MCF 10A (cell line): ENCODE measurements at regions of chr7 and their contacts with region 1.

Region 1: GRCh38 chr7:98168181-98168905 is 42.9 kb upstream of the BHLHA15 start:
- DNase-seq: peak; percentile 82
- H3K4me3 Mint-ChIP-seq: no peak overlapping the region
- H3K27ac Mint-ChIP-seq: no peak overlapping the region
- H3K4me1 Mint-ChIP-seq: peaks cover 9% of the 10 kb centered on the region
- H3K27me3 Mint-ChIP-seq: no peaks in the 10 kb centered on the region
- CTCF ChIP-seq: peak; percentile 86

Region 2: DNA sequence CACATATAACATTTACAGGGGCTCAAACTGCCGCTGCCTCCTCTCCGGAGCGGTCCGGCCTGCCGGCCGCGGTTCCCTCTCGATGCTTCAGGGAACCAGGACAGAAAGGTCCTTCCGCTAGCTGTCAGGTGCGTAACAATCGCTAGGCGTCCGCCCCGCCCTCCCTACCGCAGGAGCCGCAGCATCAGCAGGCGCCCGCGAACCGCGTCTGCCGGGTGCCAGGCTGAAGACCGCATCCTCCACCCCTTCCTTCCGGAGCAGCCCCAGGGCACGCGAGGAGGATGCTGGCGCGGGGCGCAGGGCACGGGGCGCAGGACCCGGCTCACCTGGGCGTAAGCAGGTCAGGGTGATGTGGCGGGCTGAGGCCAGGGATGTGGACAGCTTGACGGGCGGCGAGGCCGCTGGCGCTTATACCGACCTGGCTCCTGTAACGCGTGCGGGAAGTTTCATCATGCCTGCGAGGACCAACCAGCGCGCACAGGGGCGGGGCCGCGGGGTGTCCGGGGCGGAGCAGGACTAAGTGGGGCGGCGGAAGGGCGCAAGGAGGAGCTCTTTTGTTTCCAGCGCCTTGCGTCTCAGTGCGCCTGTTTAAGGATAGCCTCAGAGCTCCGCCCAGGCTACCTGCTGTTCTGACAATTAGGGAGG is 296.2 kb before region 1 on chr7 and contains the start of gene ASNS:
- CTCF ChIA-PET with region 1: interaction called, 6 read pairs
- POLR2A ChIA-PET with region 1: interaction called, 4 read pairs
- intact Hi-C with region 1: loop called (anchors 10 kb)
- DNase-seq: peak; percentile 96
- H3K4me3 Mint-ChIP-seq: peak within 1 kb of the TSS; percentile 86
- H3K27ac Mint-ChIP-seq: peak within 1 kb of the TSS; percentile 83
- H3K4me1 Mint-ChIP-seq: peaks cover 12% of the 10 kb centered on the region
- H3K27me3 Mint-ChIP-seq: no peaks in the 10 kb centered on the region
- CTCF ChIP-seq: no peak
- total RNA-seq, gene ASNS: 191 and 303 TPM in 2 replicates

Region 3: DNA sequence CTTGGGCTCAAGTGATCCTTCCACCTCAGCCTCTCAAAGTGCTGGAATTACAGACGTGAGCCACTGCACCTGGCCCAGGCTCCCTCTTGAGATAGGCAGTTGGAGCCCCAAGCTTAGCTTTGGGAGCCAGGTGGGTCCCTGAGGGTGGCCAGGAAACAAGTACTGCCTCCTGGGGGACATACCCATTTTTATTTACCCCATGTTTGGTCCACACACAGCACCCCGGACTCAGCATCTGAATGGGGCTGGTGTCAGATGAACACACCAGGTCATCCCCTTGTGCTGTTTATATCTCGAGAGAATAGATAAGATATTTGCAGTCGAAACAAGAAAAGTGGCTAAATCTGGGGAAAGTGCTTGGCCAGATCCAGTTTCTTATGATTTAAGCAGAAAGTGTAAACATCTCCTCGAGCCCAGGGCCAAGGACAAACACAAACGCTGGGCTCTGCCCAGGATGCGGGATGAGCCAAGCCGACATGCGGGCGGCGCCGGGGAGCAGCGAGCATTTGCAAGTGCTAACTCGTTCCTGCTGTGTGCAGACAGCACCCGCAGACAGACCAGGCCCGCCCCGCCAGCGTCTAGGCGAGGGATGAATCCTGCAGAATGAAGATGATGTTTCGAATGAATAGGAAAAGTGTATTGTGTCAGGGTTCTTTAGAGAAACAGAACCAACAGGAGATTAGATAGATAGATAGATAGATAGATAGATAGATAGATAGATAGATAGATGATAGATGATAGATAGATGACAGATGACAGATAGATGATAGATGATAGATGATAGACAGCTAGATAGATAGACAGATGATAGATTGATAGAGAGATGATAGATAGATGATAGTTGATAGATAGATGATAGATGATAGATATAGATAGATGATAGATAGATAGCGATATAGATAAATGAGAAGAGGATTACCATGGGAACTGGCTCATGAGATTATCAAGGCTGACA is 134.0 kb before region 1 on chr7:
- CTCF ChIA-PET with region 1: interaction called, 13 read pairs
- POLR2A ChIA-PET with region 1: no interaction called
- intact Hi-C with region 1: no loop called
- DNase-seq: peak; percentile 38
- H3K4me3 Mint-ChIP-seq: no peak overlapping the region
- H3K27ac Mint-ChIP-seq: no peak overlapping the region
- H3K4me1 Mint-ChIP-seq: peaks cover 6% of the 10 kb centered on the region
- H3K27me3 Mint-ChIP-seq: no peaks in the 10 kb centered on the region
- CTCF ChIP-seq: no peak

Region 4: DNA sequence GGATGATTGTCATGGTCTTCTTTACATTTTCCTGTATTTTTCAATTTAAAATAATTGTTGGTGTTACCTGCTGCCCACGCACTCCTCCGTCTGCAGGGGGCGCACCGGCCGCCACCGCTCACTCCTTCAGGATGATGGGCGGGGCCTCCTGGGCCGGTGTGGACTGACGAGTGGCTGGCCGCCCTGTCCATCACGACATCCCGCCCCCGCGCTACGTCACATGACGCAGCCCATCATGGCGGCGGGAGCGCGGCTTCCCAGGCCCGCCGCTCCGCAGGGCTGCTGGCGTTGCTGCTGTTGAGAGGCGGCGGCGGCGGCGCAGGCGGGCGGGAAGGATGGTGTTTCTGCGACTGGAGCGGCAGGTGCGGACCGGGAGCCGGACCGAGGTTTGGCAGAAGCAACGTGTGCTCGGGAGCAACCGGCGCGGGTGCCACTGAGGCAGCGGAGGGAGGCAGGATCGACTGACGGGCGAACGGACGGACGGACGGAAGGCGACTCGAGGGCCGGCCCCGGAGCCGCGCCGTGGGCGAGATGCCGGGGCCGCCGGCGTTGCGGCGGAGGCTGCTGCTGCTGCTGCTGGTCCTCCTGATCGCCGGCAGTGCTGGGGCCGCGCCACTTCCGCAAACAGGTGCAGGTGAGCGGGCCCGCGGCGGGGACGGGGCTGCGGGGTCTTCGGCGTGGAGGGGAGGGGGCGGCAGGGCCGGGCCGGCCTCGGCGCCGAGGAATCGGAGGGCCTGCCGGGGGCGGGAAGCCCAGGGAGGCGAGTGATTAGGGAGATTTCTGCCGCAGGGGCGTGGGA is 61.5 kb before region 1 on chr7 and contains the start of gene LMTK2:
- CTCF ChIA-PET with region 1: interaction called, 87 read pairs
- POLR2A ChIA-PET with region 1: interaction called, 3 read pairs
- intact Hi-C with region 1: loop called (anchors 1 kb)
- DNase-seq: peak; percentile 93
- H3K4me3 Mint-ChIP-seq: peak within 1 kb of the TSS; percentile 90
- H3K27ac Mint-ChIP-seq: peak within 1 kb of the TSS; percentile 79
- H3K4me1 Mint-ChIP-seq: peaks cover 12% of the 10 kb centered on the region
- H3K27me3 Mint-ChIP-seq: no peaks in the 10 kb centered on the region
- CTCF ChIP-seq: peak; percentile 84
- total RNA-seq, gene LMTK2: 16.8 and 21.6 TPM in 2 replicates

Region 5: GRCh38 chr7:98133181-98133580 is 35.2 kb before region 1 on chr7:
- CTCF ChIA-PET with region 1: interaction called, 21 read pairs
- POLR2A ChIA-PET with region 1: interaction called, 11 read pairs
- intact Hi-C with region 1: no loop called
- DNase-seq: no peak
- H3K4me3 Mint-ChIP-seq: peak overlapping the region; percentile 33
- H3K27ac Mint-ChIP-seq: peak overlapping the region; percentile 91
- H3K4me1 Mint-ChIP-seq: peaks cover 35% of the 10 kb centered on the region
- H3K27me3 Mint-ChIP-seq: no peaks in the 10 kb centered on the region
- CTCF ChIP-seq: no peak

Region 6: GRCh38 chr7:98142658-98143057 is 25.7 kb before region 1 on chr7:
- CTCF ChIA-PET with region 1: interaction called, 13 read pairs
- POLR2A ChIA-PET with region 1: interaction called, 3 read pairs
- intact Hi-C with region 1: no loop called
- DNase-seq: no peak
- H3K4me3 Mint-ChIP-seq: no peak overlapping the region
- H3K27ac Mint-ChIP-seq: no peak overlapping the region
- H3K4me1 Mint-ChIP-seq: no peaks in the 10 kb centered on the region
- H3K27me3 Mint-ChIP-seq: no peaks in the 10 kb centered on the region
- CTCF ChIP-seq: no peak

Region 7: DNA sequence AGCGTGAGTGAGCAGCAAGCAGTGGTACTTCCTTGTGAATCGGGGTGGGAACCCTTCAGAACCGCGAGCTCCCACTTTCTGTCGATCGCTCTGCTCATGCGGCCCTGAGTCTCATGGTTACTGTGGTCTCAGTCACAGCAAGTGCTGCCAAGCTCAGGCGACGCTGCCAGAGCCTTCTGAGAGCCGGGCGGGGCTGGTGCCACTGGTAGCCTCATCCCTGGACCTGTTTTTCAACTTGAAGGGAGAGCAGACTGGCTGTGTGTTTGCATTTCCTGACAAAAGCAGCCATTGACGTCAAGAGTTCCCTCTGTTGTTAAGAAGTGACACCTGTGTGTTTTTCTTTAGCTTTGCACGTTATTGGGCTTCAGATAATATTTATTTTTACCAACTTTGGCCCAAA is 10.0 kb after region 1 on chr7:
- CTCF ChIA-PET with region 1: interaction called, 51 read pairs
- POLR2A ChIA-PET with region 1: interaction called, 4 read pairs
- intact Hi-C with region 1: no loop called
- DNase-seq: no peak
- H3K4me3 Mint-ChIP-seq: no peak overlapping the region
- H3K27ac Mint-ChIP-seq: no peak overlapping the region
- H3K4me1 Mint-ChIP-seq: no peaks in the 10 kb centered on the region
- H3K27me3 Mint-ChIP-seq: no peaks in the 10 kb centered on the region
- CTCF ChIP-seq: no peak

Region 8: DNA sequence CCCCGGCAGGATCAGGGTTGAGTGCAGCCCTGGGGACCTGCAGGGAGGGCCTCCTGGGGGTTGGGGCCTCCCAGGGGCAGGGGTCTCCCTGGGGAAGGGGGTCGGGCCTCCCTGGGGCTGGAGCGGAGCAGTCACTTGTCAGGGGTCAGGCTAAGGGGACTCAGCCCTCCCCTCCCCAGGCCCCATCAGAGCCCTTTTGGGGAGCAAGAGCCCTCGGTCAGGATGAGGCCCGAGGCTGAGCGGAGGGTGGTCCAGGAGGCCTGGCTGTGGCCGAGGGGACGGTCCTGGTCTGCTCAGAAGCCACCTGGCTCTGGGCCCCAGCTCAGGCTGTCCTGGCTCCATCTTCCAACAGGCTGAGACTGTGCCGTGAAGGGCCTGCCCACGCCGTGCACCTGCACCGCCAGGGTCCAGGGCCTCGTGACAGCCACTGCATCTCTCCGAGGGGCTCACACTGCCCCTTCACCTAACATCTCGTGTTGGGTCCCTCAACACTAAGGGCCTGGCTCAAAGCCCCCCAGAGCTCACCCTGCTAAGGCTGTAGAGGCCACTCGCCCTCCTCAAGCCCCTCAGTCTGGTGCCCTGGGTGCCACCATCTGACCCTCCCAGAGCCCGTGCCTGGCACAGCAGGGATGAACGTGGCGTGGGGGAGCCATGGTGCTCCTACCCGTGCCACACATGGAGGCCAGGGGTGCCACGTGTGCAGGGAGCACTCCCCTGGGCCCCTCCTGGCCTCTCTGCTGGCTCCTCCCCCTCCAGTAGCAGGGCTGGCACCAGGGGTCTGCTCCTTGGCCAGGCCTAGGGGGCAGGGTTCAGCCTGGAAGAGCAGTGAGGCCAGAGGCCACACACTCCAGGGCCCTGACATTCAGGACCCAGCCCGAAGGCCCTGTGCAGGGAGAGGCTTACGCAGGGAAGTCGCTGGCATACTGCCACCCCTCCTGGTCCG is 55.8 kb after region 1 on chr7:
- CTCF ChIA-PET with region 1: no interaction called
- POLR2A ChIA-PET with region 1: no interaction called
- intact Hi-C with region 1: no loop called
- DNase-seq: no peak
- H3K4me3 Mint-ChIP-seq: no peak overlapping the region
- H3K27ac Mint-ChIP-seq: no peak overlapping the region
- H3K4me1 Mint-ChIP-seq: no peaks in the 10 kb centered on the region
- H3K27me3 Mint-ChIP-seq: no peaks in the 10 kb centered on the region
- CTCF ChIP-seq: no peak

Region 9: GRCh38 chr7:98334081-98334480 is 165.7 kb after region 1 on chr7:
- CTCF ChIA-PET with region 1: no interaction called
- POLR2A ChIA-PET with region 1: no interaction called
- intact Hi-C with region 1: no loop called
- DNase-seq: no peak
- H3K4me3 Mint-ChIP-seq: no peak overlapping the region
- H3K27ac Mint-ChIP-seq: no peak overlapping the region
- H3K4me1 Mint-ChIP-seq: peaks cover 11% of the 10 kb centered on the region
- H3K27me3 Mint-ChIP-seq: no peaks in the 10 kb centered on the region
- CTCF ChIP-seq: no peak

Region 10: GRCh38 chr7:98669329-98670000 is 501.1 kb after region 1 on chr7:
- CTCF ChIA-PET with region 1: no interaction called
- POLR2A ChIA-PET with region 1: no interaction called
- intact Hi-C with region 1: no loop called
- DNase-seq: no peak
- H3K4me3 Mint-ChIP-seq: no peak overlapping the region
- H3K27ac Mint-ChIP-seq: no peak overlapping the region
- H3K4me1 Mint-ChIP-seq: no peaks in the 10 kb centered on the region
- H3K27me3 Mint-ChIP-seq: no peaks in the 10 kb centered on the region
- CTCF ChIP-seq: no peak

Region 11: GRCh38 chr7:99897322-99898022 is 1729.1 kb after region 1 on chr7:
- CTCF ChIA-PET with region 1: no interaction called
- POLR2A ChIA-PET with region 1: no interaction called
- intact Hi-C with region 1: no loop called
- DNase-seq: no peak
- H3K4me3 Mint-ChIP-seq: no peak overlapping the region
- H3K27ac Mint-ChIP-seq: no peak overlapping the region
- H3K4me1 Mint-ChIP-seq: peaks cover 2% of the 10 kb centered on the region
- H3K27me3 Mint-ChIP-seq: no peaks in the 10 kb centered on the region
- CTCF ChIP-seq: no peak